PC-3 (cell line): ENCODE measurements at regions of chr3 and their contacts with region 1.

Region 1: DNA sequence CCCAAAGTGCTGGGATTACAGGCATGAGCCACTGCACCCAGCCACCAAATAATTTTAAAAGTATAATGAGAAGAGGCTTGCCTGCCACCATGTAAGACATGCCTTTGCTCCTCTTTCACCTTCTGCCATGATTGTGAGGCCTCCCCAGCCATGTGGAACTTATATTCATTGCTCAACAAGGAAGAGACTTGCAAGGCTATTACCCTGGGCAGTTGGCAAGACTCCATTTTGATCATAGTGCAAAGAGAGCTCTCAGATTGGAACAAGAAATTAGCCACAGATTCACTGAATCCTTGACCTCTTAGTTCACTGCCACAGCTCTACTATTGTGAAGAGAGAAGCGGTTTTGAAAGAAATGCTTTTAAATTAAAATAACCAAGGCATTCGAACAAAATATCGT is 6.1 kb downstream of the SCAP start:
- DNase-seq: no peak
- ATAC-seq: no peak
- H3K4me3 ChIP-seq: no peak overlapping the region
- H3K27ac ChIP-seq: no peak overlapping the region
- H3K4me1 ChIP-seq: peaks cover 8% of the 10 kb centered on the region
- H3K27me3 ChIP-seq: no peaks in the 10 kb centered on the region
- CTCF ChIP-seq: no peak

Region 2: GRCh38 chr3:47513125-47513929 is 43.7 kb after region 1 on chr3 and contains the start of gene ELP6:
- CTCF ChIA-PET with region 1: no interaction called
- POLR2A ChIA-PET with region 1: no interaction called
- intact Hi-C with region 1: no loop called
- DNase-seq: peak; percentile 96
- ATAC-seq: peak; percentile 98
- H3K4me3 ChIP-seq: peak within 1 kb of the TSS; percentile 80
- H3K27ac ChIP-seq: peak within 1 kb of the TSS; percentile 88
- H3K4me1 ChIP-seq: peaks cover 11% of the 10 kb centered on the region
- H3K27me3 ChIP-seq: no peaks in the 10 kb centered on the region
- CTCF ChIP-seq: peak; percentile 58
- total RNA-seq, gene ELP6: 64.5 and 97.9 TPM in 2 replicates

Region 3: GRCh38 chr3:47824541-47825473 is 355.2 kb after region 1 on chr3:
- CTCF ChIA-PET with region 1: interaction called, 15 read pairs
- POLR2A ChIA-PET with region 1: no interaction called
- intact Hi-C with region 1: no loop called
- DNase-seq: peak; percentile 89
- ATAC-seq: peak; percentile 99
- H3K4me3 ChIP-seq: peak overlapping the region; percentile 94
- H3K27ac ChIP-seq: peak overlapping the region; percentile 36
- H3K4me1 ChIP-seq: peaks cover 17% of the 10 kb centered on the region
- H3K27me3 ChIP-seq: no peaks in the 10 kb centered on the region
- CTCF ChIP-seq: peak; percentile 82